SK-N-SH (cell line): ENCODE measurements at regions of chr16 and their contacts with region 1.

Region 1: GRCh38 chr16:23595951-23596720 is at the start of gene NDUFAB1:
- DNase-seq: peak; percentile 93
- H3K4me3 ChIP-seq: peak within 1 kb of the TSS; percentile 87 to 97
- H3K27ac ChIP-seq: peak within 1 kb of the TSS; percentile 60 to 78; a peak in 3 of 4 replicates
- H3K4me1 ChIP-seq: peaks cover 0 to 7% of the 10 kb centered on the region in 2 experiments; a peak in 1 of 4 replicates
- H3K27me3 ChIP-seq: no peaks in the 10 kb centered on the region
- CTCF ChIP-seq: peak; percentile 86
- EP300 ChIP-seq: peak in 1 of 2 experiments; percentile 53; a peak in 1 of 4 replicates
- RAD21 ChIP-seq: no peak
- polyA plus RNA-seq, gene NDUFAB1: 187 and 191 TPM in 2 replicates

Region 2: GRCh38 chr16:23578101-23578830 is 17.9 kb before region 1 on chr16:
- CTCF ChIA-PET with region 1: interaction called, 10 read pairs
- POLR2A ChIA-PET with region 1: no interaction called
- DNase-seq: no peak
- H3K4me3 ChIP-seq: no peak overlapping the region
- H3K27ac ChIP-seq: no peak overlapping the region
- H3K4me1 ChIP-seq: no peaks in the 10 kb centered on the region
- H3K27me3 ChIP-seq: no peaks in the 10 kb centered on the region
- CTCF ChIP-seq: no peak
- EP300 ChIP-seq: no peak
- RAD21 ChIP-seq: no peak

Region 3: GRCh38 chr16:23608194-23608593 is 12.1 kb after region 1 on chr16:
- CTCF ChIA-PET with region 1: interaction called, 17 read pairs
- POLR2A ChIA-PET with region 1: no interaction called
- DNase-seq: no peak
- H3K4me3 ChIP-seq: no peak overlapping the region
- H3K27ac ChIP-seq: peak overlapping the region in 1 of 2 experiments; percentile 78; a peak in 2 of 4 replicates
- H3K4me1 ChIP-seq: no peaks in the 10 kb centered on the region
- H3K27me3 ChIP-seq: no peaks in the 10 kb centered on the region
- CTCF ChIP-seq: no peak
- EP300 ChIP-seq: no peak
- RAD21 ChIP-seq: no peak